ENCODE measurements at regions of chr11 and their contacts with region 1.

Region 1: DNA sequence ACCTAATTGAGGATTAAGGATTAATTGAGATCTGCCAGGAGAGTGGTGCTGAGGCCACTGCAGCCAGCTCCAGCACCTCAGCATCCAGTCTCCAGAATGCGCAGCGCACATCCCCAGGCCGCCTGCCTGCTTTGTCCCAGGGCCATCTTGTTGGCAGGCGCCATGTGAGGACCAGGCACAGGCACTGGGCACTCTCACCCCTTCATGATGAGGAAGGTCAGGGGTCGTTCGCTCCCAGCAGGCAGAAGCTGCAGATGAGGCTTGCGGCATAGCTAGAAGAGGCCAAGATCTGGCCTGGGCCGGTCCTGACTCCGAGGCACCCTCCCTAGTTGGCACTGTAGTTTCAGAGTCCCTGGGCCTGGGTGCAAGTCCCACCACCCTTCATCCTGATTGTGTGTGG is 6.4 kb downstream of the CABP2 start:
- DNase-seq: no peak
- ATAC-seq: no peak
- H3K4me3 ChIP-seq: no peak overlapping the region
- H3K4me3 Mint-ChIP-seq: no peak overlapping the region
- H3K27ac ChIP-seq: no peak overlapping the region
- H3K27ac Mint-ChIP-seq: no peak overlapping the region
- H3K4me1 ChIP-seq: no peaks in the 10 kb centered on the region
- H3K4me1 Mint-ChIP-seq: no peaks in the 10 kb centered on the region
- H3K27me3 ChIP-seq: peaks cover 0 to 5% of the 10 kb centered on the region in 2 experiments
- H3K27me3 Mint-ChIP-seq: peaks cover 4% of the 10 kb centered on the region
- CTCF ChIP-seq: no peak

Region 2: GRCh38 chr11:67505605-67506396 is 11.0 kb before region 1 on chr11:
- CTCF ChIA-PET with region 1: no interaction called
- POLR2A ChIA-PET with region 1: no interaction called
- intact Hi-C with region 1: no loop called
- DNase-seq: peak; percentile 78 to 96 (median 87)
- ATAC-seq: peak; percentile 63
- H3K4me3 ChIP-seq: peak overlapping the region; percentile 97
- H3K4me3 Mint-ChIP-seq: peak overlapping the region; percentile 93
- H3K27ac ChIP-seq: peak overlapping the region; percentile 71 to 79
- H3K27ac Mint-ChIP-seq: peak overlapping the region; percentile 98
- H3K4me1 ChIP-seq: peaks cover 63% of the 10 kb centered on the region
- H3K4me1 Mint-ChIP-seq: peaks cover 54% of the 10 kb centered on the region
- H3K27me3 ChIP-seq: no peaks in the 10 kb centered on the region
- H3K27me3 Mint-ChIP-seq: no peaks in the 10 kb centered on the region
- CTCF ChIP-seq: peak; percentile 97

Region 3: GRCh38 chr11:67665541-67666362 is 148.9 kb after region 1 on chr11:
- CTCF ChIA-PET with region 1: no interaction called
- POLR2A ChIA-PET with region 1: no interaction called
- intact Hi-C with region 1: loop called in 1 of 2 experiments (anchors 10 kb)
- DNase-seq: peak in 1 of 14 experiments; percentile 13
- ATAC-seq: no peak
- H3K4me3 ChIP-seq: no peak overlapping the region
- H3K4me3 Mint-ChIP-seq: no peak overlapping the region
- H3K27ac ChIP-seq: no peak overlapping the region
- H3K27ac Mint-ChIP-seq: no peak overlapping the region
- H3K4me1 ChIP-seq: no peaks in the 10 kb centered on the region
- H3K4me1 Mint-ChIP-seq: no peaks in the 10 kb centered on the region
- H3K27me3 ChIP-seq: no peaks in the 10 kb centered on the region
- H3K27me3 Mint-ChIP-seq: no peaks in the 10 kb centered on the region
- CTCF ChIP-seq: no peak

Measured in CD4-positive, alpha-beta T cell (primary cell).